Left cardiac atrium (tissue), 4 donors: ENCODE measurements at regions of chr7 and their contacts with region 1.

Region 1: DNA sequence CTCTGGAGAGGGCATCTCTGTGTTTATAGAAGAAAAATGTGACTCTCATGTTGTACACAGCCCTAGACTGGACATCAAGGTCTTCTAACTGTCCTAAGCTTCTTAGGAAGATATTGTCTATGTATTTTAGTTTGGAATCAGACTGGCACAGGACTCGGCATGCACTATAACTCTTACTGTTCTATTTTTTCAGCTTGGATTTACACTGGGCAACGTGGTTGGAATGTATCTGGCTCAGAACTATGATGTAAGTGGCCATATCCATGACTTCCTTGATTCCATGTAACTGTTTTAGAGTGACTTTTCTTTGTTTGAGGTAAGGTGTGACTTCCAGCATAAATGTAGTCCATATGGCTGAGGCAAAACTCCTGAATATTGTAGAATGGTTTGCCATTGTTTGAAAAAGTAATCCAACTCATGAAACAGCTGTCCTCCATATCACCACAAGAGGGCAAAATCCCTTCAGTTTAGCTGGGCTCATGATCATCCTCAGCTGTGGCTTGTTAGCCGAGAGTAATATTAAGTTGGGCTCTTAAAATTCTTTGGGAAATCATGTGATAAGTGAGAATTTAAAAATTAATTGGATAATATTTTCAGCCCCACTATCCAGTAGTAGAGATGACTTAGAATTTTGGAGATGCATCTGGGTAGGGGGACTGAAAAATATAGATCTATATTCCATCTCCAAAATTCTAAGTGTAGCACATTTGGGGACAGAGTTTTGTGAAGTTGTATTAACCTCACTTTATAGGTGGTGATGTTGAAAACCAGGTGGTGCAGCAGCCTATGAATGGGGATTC is 10.4 kb downstream of the STMP1 start:
- DNase-seq: no peak
- ATAC-seq: peak; percentile 77 to 88

Region 2: GRCh38 chr7:135757719-135758411 is 85.1 kb after region 1 on chr7:
- intact Hi-C with region 1: loop called in 1 of 2 experiments (anchors 5 kb)
- DNase-seq: peak; percentile 65
- ATAC-seq: peak; percentile 42 to 57

Region 3: DNA sequence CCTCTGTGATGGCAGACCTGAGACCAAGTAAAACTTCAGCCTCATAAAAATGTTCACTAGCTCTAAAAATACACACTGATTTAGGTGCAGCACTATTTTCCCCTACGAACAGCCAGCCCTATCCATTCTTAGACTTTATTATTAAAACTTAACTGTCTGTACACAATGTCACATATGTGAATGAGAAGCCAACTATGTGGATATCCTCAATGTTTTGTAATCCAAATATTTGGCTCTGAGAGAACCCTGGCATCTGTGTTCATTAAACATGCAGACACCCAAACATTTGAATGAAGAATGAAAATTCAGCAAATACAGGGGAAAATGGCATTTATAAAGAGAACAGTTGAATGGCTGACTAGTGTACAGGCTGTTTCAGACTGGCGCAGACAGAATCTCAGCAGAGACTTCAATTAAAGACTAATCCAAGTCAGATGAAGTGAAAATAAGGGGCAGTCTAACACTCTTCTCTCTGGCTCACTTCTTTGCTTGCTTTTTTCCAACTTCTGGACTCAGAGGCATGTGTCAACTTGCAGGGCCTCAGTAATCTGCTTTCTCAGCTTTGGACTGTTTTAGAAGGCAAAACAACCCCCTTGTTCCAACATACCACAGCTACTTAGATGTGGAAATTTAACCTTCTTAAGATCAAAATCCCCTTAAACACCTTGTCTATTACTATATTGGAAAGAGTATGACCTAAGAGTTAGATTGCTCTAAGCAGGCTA is 123.2 kb after region 1 on chr7:
- intact Hi-C with region 1: loop called (anchors 2 to 10 kb)
- DNase-seq: no peak
- ATAC-seq: peak in 1 of 2 donors; percentile 30

Region 4: DNA sequence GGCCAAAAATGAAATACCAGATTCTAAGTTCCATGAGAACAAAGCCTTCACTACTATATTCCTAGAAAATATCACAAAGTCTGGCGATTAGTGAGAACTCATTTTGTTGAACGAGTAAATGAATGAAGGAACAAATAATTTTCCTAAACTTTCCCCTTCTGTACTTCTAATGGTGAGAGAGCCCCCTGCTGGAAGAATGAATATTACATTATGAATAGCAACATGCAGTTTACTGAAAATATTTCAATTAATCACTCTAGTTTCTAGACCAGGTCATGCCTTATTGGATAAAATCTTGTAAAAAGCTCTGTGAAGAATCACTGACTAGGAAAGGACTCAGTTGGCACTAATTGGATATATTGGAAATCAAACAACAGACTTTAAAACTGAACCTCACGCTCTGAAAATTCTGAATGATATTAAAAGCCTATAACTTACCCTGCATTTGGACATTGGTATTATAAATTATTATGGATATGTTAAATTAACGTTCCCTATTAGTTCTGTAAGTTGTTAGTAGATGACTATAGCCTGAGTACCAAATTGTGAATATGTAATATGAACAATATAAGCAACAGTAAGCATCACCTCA is 336.8 kb after region 1 on chr7:
- intact Hi-C with region 1: loop called in 1 of 2 experiments (anchors 5 kb)
- DNase-seq: no peak
- ATAC-seq: peak; percentile 19 to 42